ENCODE measurements at regions of chrX and their contacts with region 1.

Region 1: GRCh38 chrX:153667956-153668396 is 5.6 kb downstream of the PNCK start:
- DNase-seq: peak; percentile 69
- H3K4me3 ChIP-seq: no peak overlapping the region
- H3K27ac ChIP-seq: no peak overlapping the region
- H3K4me1 ChIP-seq: no peaks in the 10 kb centered on the region
- H3K27me3 ChIP-seq: peaks cover 4 to 5% of the 10 kb centered on the region in 2 experiments
- CTCF ChIP-seq: peak; percentile 64 to 79
- POLR2A ChIP-seq: no peak

Region 2: GRCh38 chrX:152941328-152942106 is 726.5 kb before region 1 on chrX:
- CTCF ChIA-PET with region 1: interaction called, 5 read pairs
- POLR2A ChIA-PET with region 1: no interaction called
- dilution Hi-C with region 1: no loop called
- intact Hi-C with region 1: loop called (anchors 2 kb)
- DNase-seq: peak; percentile 91
- H3K4me3 ChIP-seq: peak overlapping the region; percentile 28 to 74 (median 62)
- H3K27ac ChIP-seq: peak overlapping the region; percentile 46
- H3K4me1 ChIP-seq: peaks cover 13% of the 10 kb centered on the region
- H3K27me3 ChIP-seq: no peaks in the 10 kb centered on the region
- CTCF ChIP-seq: peak; percentile 64 to 81
- POLR2A ChIP-seq: peak; percentile 75

Region 3: GRCh38 chrX:153032397-153033118 is 635.4 kb before region 1 on chrX:
- CTCF ChIA-PET with region 1: interaction called, 10 read pairs
- POLR2A ChIA-PET with region 1: no interaction called
- dilution Hi-C with region 1: no loop called
- intact Hi-C with region 1: loop called (anchors 1 kb)
- DNase-seq: peak; percentile 56
- H3K4me3 ChIP-seq: peak overlapping the region in 2 of 3 experiments; percentile 20 to 27
- H3K27ac ChIP-seq: no peak overlapping the region
- H3K4me1 ChIP-seq: no peaks in the 10 kb centered on the region
- H3K27me3 ChIP-seq: no peaks in the 10 kb centered on the region
- CTCF ChIP-seq: peak; percentile 69 to 83
- POLR2A ChIP-seq: no peak

Region 4: GRCh38 chrX:153554519-153555167 is 113.3 kb before region 1 on chrX:
- CTCF ChIA-PET with region 1: interaction called, 89 read pairs
- POLR2A ChIA-PET with region 1: no interaction called
- dilution Hi-C with region 1: no loop called
- intact Hi-C with region 1: loop called (anchors 1 kb)
- DNase-seq: peak; percentile 24
- H3K4me3 ChIP-seq: no peak overlapping the region
- H3K27ac ChIP-seq: no peak overlapping the region
- H3K4me1 ChIP-seq: no peaks in the 10 kb centered on the region
- H3K27me3 ChIP-seq: no peaks in the 10 kb centered on the region
- CTCF ChIP-seq: peak; percentile 48 to 71
- POLR2A ChIP-seq: no peak

Region 5: DNA sequence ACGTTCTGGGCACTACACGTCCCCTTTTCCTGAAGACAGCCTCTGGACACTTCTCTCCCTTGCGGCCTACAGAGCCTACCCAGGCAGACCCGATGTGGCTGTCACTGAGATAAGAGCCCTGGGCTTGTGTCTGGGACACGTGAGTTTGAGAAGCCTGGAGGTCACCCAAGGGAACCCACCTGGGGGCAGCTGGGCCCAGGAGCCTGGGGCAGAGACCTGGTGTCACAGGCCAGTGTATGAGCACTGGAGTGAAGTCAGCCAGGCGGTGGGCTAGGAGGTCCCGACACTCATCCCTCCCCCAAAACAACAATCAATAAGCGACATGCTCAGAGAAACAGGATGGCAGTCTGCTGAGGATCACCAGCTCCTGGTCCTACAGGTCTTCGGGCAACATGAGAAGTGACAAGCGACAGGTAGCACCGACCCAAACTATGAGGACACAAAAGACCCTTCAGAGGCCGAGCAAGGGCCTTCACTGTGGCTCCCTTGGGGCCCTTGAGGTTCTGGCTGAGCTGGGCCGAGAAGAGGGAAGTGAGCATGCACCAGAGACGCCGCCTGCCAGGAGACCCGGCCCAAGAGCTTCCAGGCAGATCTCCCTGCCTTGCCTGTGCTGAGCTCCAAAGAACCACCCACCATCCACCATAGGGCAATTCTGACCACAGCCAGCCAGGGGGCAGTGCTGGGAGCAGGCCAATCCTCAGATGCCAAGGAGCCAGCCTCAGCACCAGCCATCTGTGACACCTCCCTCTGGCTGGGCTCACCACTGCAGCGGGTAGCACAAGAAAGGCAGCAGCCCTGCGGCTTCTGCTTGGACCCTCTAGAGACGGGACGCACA is 32.0 kb before region 1 on chrX:
- CTCF ChIA-PET with region 1: interaction called, 8 read pairs
- POLR2A ChIA-PET with region 1: no interaction called
- dilution Hi-C with region 1: no loop called
- intact Hi-C with region 1: loop called (anchors 2 kb)
- DNase-seq: peak; percentile 30
- H3K4me3 ChIP-seq: no peak overlapping the region
- H3K27ac ChIP-seq: no peak overlapping the region
- H3K4me1 ChIP-seq: no peaks in the 10 kb centered on the region
- H3K27me3 ChIP-seq: peaks cover 2 to 4% of the 10 kb centered on the region in 2 experiments
- CTCF ChIP-seq: peak; percentile 24 to 63
- POLR2A ChIP-seq: no peak

Region 6: GRCh38 chrX:153657161-153657560 is 10.8 kb before region 1 on chrX:
- CTCF ChIA-PET with region 1: interaction called, 23 read pairs
- POLR2A ChIA-PET with region 1: no interaction called
- dilution Hi-C with region 1: no loop called
- intact Hi-C with region 1: no loop called
- DNase-seq: no peak
- H3K4me3 ChIP-seq: no peak overlapping the region
- H3K27ac ChIP-seq: no peak overlapping the region
- H3K4me1 ChIP-seq: no peaks in the 10 kb centered on the region
- H3K27me3 ChIP-seq: peaks cover 0 to 9% of the 10 kb centered on the region in 2 experiments
- CTCF ChIP-seq: no peak
- POLR2A ChIP-seq: no peak

Region 7: DNA sequence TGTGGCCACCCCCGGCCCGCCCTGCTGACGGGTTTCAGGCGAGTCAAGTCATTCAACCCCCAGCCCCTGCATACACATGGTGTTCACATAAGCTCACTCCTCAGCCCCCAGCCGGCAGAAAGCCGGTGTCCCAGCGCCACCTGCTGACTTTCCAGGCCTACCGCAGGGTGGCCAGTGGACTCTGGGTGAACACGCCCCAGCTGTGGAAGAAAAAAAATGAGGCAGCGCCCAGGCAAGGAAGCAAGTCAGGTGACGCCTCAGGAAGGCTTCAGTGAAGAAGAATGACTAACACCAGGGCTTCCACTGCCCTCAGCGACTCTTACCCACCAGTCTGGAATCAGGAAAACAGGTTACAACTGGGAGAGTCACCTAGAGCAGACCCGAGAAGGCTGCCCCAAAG is 40.4 kb after region 1 on chrX:
- CTCF ChIA-PET with region 1: interaction called, 16 read pairs
- POLR2A ChIA-PET with region 1: no interaction called
- dilution Hi-C with region 1: no loop called
- intact Hi-C with region 1: no loop called
- DNase-seq: peak; percentile 77
- H3K4me3 ChIP-seq: no peak overlapping the region
- H3K27ac ChIP-seq: no peak overlapping the region
- H3K4me1 ChIP-seq: peaks cover 12% of the 10 kb centered on the region
- H3K27me3 ChIP-seq: no peaks in the 10 kb centered on the region
- CTCF ChIP-seq: peak; percentile 66 to 67
- POLR2A ChIP-seq: no peak

Region 8: DNA sequence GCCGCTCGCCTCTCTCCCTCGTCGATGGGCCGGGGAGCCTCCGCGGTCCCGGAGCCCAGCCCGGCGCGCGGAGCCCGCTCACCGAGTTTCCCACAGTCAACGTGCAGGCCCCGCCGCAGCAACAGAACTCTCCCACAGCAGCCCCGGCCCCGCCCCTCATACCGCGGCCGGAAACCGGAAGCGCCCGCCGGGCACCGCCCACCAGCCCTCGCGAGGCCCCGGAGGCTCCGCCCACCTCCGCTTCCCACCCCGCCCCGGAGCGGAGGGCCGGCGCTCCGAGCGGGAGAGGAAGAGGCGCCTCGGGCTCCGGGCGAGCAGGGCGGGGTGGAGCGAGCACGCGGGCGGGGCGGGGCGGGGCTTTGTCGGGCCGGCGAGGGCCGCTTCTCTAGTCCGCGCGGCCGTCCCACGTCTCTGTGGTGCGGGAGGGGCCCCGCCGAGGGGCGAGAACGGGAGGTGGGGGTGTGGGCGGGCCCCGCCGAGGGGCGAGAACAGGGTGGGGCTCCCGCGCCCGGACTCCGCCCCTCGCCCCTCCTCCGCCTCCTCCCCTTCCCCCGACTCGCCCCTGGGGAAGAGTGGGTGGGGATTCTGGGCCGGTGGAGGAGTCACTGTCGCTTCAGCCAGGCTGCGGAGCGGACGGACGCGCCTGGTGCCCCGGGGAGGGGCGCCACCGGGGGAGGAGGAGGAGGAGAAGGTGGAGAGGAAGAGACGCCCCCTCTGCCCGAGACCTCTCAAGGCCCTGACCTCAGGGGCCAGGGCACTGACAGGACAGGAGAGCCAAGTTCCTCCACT is 56.5 kb after region 1 on chrX and contains the starts of genes ABCD1 and BCAP31:
- CTCF ChIA-PET with region 1: no interaction called
- POLR2A ChIA-PET with region 1: no interaction called
- dilution Hi-C with region 1: no loop called
- intact Hi-C with region 1: no loop called
- DNase-seq: peak; percentile 84
- H3K4me3 ChIP-seq: peak within 1 kb of the TSS; percentile 41 to 73 (median 54)
- H3K27ac ChIP-seq: peak within 1 kb of the TSS; percentile 47
- H3K4me1 ChIP-seq: peaks cover 28% of the 10 kb centered on the region
- H3K27me3 ChIP-seq: no peaks in the 10 kb centered on the region
- CTCF ChIP-seq: no peak
- POLR2A ChIP-seq: peak; percentile 53
- total RNA-seq, gene ABCD1: 12.9 and 14.3 TPM in 2 replicates
- total RNA-seq, gene BCAP31: 198 and 203 TPM in 2 replicates

Measured in endothelial cell of umbilical vein (primary cell).